Panc1 (cell line): ENCODE measurements at regions of chr10 and their contacts with region 1.

Region 1: DNA sequence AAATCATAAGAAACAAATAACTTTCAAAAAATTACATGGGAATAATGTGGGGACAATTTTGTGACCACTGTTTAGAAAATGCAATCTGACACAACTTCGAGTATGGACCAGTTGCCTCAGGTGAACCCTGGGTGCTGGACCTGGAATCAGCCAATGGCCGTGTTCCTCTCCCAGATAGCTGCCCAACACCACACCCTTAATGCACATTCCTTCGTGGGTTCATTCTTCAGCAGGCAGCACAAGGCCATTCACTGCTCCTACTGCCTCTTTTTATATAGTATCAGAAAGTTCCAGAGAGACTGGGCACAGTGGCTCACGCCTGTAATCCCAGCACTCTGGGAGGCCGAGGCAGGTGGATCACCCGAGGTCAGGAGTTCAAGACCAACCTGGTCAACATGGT is 89.1 kb upstream of the PARD3 start:
- DNase-seq: no peak
- ATAC-seq: no peak
- H3K4me3 ChIP-seq: no peak overlapping the region
- H3K27ac ChIP-seq: no peak overlapping the region
- H3K4me1 ChIP-seq: no peaks in the 10 kb centered on the region
- H3K27me3 ChIP-seq: no peaks in the 10 kb centered on the region
- CTCF ChIP-seq: no peak

Region 2: DNA sequence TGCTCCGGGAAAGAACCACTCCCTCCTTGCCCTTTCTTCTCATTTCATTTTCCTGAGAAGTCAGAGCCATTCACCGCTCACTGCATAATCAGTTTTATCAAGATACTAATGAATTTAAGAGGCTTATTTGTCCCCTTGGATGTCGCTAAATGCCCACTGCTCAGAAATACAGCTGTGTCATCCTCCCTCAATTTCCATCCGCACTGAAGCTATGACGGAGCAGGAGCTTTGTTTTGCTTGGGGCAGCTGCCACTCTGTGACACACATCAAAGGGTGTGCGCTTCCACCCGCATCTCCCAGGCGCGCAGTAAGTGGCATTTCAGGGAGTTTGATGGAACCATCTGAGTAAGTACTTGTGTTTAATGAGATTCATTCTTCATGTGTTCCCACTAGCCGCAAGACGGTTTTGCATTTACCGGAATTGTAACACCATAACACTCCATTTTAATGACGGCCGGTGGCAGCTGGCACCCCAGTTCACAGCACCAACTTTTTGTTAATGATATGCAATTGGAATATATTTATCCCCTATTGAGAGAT is 14.7 kb after region 1 on chr10:
- CTCF ChIA-PET with region 1: no interaction called
- POLR2A ChIA-PET with region 1: interaction called, 14 read pairs
- in situ Hi-C with region 1: no loop called
- intact Hi-C with region 1: no loop called
- DNase-seq: no peak
- ATAC-seq: no peak
- H3K4me3 ChIP-seq: no peak overlapping the region
- H3K27ac ChIP-seq: no peak overlapping the region
- H3K4me1 ChIP-seq: no peaks in the 10 kb centered on the region
- H3K27me3 ChIP-seq: no peaks in the 10 kb centered on the region
- CTCF ChIP-seq: no peak

Region 3: DNA sequence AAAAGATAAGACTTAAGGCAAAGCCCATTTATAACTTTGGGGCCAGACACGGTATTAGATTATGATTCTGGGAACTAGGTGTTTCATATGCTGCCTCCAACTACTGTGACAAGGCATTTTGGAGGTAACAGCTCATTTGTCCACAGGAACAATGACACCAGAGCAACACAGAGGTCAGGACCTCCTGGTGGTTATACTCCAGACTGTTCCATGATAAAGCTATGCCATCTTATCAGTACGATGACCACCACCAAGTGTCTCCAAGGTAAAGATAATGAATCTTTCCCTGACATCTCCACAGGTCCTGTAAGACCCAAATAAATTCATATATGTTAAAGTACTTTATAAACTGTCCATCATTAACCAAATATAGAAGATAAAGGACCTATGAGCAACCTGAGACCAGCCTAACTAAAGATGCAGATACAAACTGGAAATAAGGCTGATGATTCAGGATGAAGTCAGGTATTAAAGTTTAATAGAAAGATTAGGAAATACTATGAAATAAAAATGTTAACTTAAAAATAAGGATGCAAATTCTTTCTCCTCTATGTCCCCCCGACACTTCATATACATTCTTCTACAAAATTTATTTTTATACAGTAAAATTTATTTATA is 159.8 kb after region 1 on chr10:
- CTCF ChIA-PET with region 1: no interaction called
- POLR2A ChIA-PET with region 1: no interaction called
- in situ Hi-C with region 1: no loop called
- intact Hi-C with region 1: no loop called
- DNase-seq: no peak
- ATAC-seq: no peak
- H3K4me3 ChIP-seq: no peak overlapping the region
- H3K27ac ChIP-seq: no peak overlapping the region
- H3K4me1 ChIP-seq: no peaks in the 10 kb centered on the region
- H3K27me3 ChIP-seq: no peaks in the 10 kb centered on the region
- CTCF ChIP-seq: no peak

Region 4: GRCh38 chr10:35236739-35237138 is 332.5 kb after region 1 on chr10:
- CTCF ChIA-PET with region 1: no interaction called
- POLR2A ChIA-PET with region 1: no interaction called
- in situ Hi-C with region 1: no loop called
- intact Hi-C with region 1: no loop called
- DNase-seq: no peak
- ATAC-seq: peak; percentile 86
- H3K4me3 ChIP-seq: no peak overlapping the region
- H3K27ac ChIP-seq: no peak overlapping the region
- H3K4me1 ChIP-seq: no peaks in the 10 kb centered on the region
- H3K27me3 ChIP-seq: no peaks in the 10 kb centered on the region
- CTCF ChIP-seq: peak; percentile 74